ENCODE measurements at regions of chr17 and their contacts with region 1.

Region 1: GRCh38 chr17:75131280-75132017 is at the start of gene NT5C:
- DNase-seq: no peak
- ATAC-seq: peak; percentile 87
- H3K4me3 ChIP-seq: peak within 1 kb of the TSS; percentile 72 to 83
- H3K27ac ChIP-seq: peak within 1 kb of the TSS; percentile 93
- H3K4me1 ChIP-seq: peaks cover 24% of the 10 kb centered on the region
- H3K27me3 ChIP-seq: no peaks in the 10 kb centered on the region
- CTCF ChIP-seq: peak; percentile 89
- total RNA-seq, gene NT5C: 63.4 TPM

Region 2: DNA sequence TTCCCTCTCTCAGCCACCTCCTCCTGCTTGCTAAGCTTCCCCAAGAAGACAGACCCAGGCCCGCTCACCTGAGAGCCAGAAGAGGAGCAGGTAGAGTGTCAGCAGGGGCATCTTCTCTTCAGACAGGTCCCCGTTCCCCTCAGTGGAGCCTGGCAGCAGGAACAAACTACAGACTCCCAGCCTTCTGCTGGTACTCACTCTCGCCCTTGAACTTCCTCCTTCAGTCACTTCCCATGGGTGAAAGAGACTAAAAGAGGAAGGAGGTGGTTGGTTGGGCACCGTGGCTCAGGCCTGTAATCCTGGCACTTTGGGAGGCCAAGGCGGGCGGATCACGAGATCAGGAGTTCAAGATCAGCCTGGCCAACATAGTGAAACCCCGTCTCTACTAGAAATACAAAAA is 418.7 kb before region 1 on chr17 and contains the start of gene CD300LF:
- CTCF ChIA-PET with region 1: no interaction called
- POLR2A ChIA-PET with region 1: no interaction called
- in situ Hi-C with region 1: no loop called
- intact Hi-C with region 1: no loop called
- DNase-seq: no peak
- ATAC-seq: no peak
- H3K4me3 ChIP-seq: no peak within 1 kb of the TSS
- H3K27ac ChIP-seq: no peak within 1 kb of the TSS
- H3K4me1 ChIP-seq: no peaks in the 10 kb centered on the region
- H3K27me3 ChIP-seq: no peaks in the 10 kb centered on the region
- CTCF ChIP-seq: no peak
- total RNA-seq, gene CD300LF: not detected

Region 3: DNA sequence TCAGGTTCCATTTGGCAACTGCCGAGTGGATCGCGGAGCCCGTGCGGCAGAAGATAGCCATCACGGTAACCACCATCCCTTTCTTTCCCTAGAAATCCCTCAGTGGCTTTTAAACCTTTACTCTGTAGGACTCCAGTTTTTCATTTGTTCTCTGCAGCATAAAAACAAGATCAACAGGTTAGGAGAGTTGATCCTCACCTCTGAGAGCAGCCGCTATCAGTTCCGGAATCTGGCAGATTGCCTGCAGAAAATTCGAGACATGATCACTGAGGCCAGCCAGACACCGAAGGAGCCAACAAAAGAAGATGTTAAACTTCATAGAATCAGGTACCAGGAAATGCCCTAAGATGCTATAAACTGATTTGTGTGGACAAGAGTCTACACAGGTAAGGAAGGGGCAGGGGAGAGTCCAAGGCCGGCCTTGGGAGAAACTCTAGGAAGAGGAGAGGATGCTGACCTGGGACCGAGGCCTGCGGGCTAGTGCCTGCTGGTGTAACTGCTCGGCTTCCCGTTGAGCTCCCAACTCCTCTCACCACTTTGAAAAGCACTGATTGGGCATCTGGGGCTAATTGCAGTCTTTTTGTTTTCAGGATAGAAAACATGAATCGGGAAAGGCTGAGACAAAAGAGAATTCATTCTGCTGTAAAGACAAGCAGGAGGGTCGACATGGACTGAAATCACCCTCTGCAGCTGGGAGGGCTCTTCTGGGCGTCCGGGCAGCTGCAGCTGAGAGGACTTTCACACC is 110.9 kb before region 1 on chr17:
- CTCF ChIA-PET with region 1: no interaction called
- POLR2A ChIA-PET with region 1: interaction called, 12 read pairs
- in situ Hi-C with region 1: no loop called
- intact Hi-C with region 1: no loop called
- DNase-seq: no peak
- ATAC-seq: no peak
- H3K4me3 ChIP-seq: no peak overlapping the region
- H3K27ac ChIP-seq: no peak overlapping the region
- H3K4me1 ChIP-seq: no peaks in the 10 kb centered on the region
- H3K27me3 ChIP-seq: no peaks in the 10 kb centered on the region
- CTCF ChIP-seq: no peak

Region 4: GRCh38 chr17:75228305-75228704 is 96.9 kb after region 1 on chr17:
- CTCF ChIA-PET with region 1: no interaction called
- POLR2A ChIA-PET with region 1: no interaction called
- in situ Hi-C with region 1: no loop called
- intact Hi-C with region 1: no loop called
- DNase-seq: no peak
- ATAC-seq: no peak
- H3K4me3 ChIP-seq: no peak overlapping the region
- H3K27ac ChIP-seq: no peak overlapping the region
- H3K4me1 ChIP-seq: no peaks in the 10 kb centered on the region
- H3K27me3 ChIP-seq: no peaks in the 10 kb centered on the region
- CTCF ChIP-seq: no peak

Measured in Panc1 (cell line).